Naive thymus-derived CD4-positive, alpha-beta T cell (primary cell): ENCODE measurements at regions of chr16 and their contacts with region 1.

Region 1: DNA sequence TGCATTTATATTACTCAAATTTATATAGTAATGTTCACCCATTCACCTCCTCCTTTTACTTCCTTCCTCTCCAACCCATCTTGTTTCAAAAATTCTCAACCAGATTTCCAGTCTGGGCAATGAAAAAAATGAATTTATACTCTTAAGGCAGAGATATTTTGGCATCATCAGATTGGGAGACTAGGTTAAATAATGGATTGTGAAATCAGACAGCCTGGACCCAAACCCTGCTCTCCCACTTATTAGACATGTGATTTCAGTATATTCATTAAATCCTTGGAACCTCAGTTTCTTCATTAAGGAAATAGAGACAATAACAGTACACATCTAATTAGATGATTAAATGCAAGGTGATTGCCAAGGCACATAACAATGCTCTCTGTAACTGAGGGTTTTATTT is 7.8 kb downstream of the ACSM1 start:
- DNase-seq: no peak
- ATAC-seq: no peak
- H3K4me3 ChIP-seq: no peak overlapping the region
- H3K4me3 Mint-ChIP-seq: no peak overlapping the region
- H3K27ac ChIP-seq: no peak overlapping the region
- H3K27ac Mint-ChIP-seq: no peak overlapping the region
- H3K4me1 ChIP-seq: no peaks in the 10 kb centered on the region
- H3K4me1 Mint-ChIP-seq: no peaks in the 10 kb centered on the region
- H3K27me3 ChIP-seq: no peaks in the 10 kb centered on the region
- H3K27me3 Mint-ChIP-seq: peaks cover 0 to 16% (median 9%) of the 10 kb centered on the region in 5 donors

Region 2: DNA sequence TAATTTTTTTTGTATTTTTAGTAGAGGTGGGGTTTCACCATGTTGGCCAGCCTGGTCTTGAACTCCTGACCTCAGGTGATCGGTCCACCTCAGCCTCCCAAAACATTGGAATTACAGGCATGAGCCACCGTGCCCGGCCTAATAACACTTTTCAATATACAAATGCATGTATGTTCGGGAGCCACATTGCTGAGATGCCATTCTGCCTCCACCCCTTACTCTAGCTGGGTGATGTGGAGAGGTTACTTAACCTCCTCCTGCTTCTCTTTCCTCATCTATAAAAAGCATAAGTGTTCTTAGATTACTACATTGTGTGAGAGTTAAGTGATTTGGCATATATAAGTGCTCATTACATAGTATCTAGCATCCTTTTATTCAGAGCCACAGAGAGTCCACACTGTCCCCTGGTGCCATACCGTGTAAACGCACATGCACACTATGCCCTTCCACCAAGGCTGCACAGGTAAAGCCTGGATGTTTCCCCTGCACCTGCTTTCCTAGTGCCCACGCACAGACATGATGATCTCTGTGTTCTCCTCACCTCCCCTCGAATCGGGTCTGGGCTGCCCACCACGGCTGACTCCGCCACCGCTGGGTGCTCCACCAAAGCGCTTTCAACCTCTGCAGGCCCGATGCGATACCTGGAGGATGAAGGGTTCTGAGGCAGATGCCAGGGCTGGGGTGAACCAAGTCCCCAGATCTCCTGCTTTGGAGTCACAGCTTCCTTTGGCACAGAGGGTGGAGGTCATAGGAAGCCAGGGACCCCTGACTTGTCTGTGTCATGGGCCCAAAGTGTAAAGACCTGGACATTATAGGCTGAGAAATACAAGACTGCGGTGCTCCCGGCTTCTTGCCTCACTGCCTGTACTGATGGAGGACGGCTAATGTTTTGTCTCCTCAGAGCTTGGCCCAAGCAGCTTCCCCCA is 64.5 kb before region 1 on chr16:
- CTCF ChIA-PET with region 1: no interaction called
- POLR2A ChIA-PET with region 1: no interaction called
- intact Hi-C with region 1: loop called in 1 of 2 experiments (anchors 5 kb)
- DNase-seq: no peak
- ATAC-seq: no peak
- H3K4me3 ChIP-seq: no peak overlapping the region
- H3K4me3 Mint-ChIP-seq: no peak overlapping the region
- H3K27ac ChIP-seq: no peak overlapping the region
- H3K27ac Mint-ChIP-seq: no peak overlapping the region
- H3K4me1 ChIP-seq: no peaks in the 10 kb centered on the region
- H3K4me1 Mint-ChIP-seq: peaks cover 0 to 7% (median 6%) of the 10 kb centered on the region in 7 donors
- H3K27me3 ChIP-seq: no peaks in the 10 kb centered on the region
- H3K27me3 Mint-ChIP-seq: no peaks in the 10 kb centered on the region